ENCODE measurements at regions of chr22 and their contacts with region 1.

Region 1: DNA sequence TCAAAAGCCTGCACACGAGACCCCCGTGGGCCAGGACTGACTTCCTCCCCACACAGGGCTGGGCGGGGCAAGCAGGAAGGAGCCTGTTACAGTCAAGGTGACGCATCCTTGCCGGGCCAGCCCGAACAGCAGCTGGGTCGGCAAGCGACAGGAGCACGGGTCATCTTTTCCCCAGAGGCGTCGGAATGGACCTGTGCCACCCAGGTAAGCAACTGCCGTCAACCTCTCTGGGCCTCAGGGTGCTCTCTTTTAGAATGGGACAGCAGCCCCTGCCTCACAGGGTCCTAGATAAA is at the start of gene CYTH4:
- DNase-seq: no peak
- ATAC-seq: peak; percentile 79
- H3K4me3 ChIP-seq: peak within 1 kb of the TSS; percentile 69
- H3K27ac ChIP-seq: peak within 1 kb of the TSS; percentile 93
- H3K4me1 ChIP-seq: peaks cover 30% of the 10 kb centered on the region
- H3K27me3 ChIP-seq: no peaks in the 10 kb centered on the region
- CTCF ChIP-seq: no peak
- EP300 ChIP-seq: no peak
- POLR2A ChIP-seq: peak; percentile 80
- RAD21 ChIP-seq: no peak
- polyA plus RNA-seq, gene CYTH4: 1.5 to 1.8 TPM

Region 2: DNA sequence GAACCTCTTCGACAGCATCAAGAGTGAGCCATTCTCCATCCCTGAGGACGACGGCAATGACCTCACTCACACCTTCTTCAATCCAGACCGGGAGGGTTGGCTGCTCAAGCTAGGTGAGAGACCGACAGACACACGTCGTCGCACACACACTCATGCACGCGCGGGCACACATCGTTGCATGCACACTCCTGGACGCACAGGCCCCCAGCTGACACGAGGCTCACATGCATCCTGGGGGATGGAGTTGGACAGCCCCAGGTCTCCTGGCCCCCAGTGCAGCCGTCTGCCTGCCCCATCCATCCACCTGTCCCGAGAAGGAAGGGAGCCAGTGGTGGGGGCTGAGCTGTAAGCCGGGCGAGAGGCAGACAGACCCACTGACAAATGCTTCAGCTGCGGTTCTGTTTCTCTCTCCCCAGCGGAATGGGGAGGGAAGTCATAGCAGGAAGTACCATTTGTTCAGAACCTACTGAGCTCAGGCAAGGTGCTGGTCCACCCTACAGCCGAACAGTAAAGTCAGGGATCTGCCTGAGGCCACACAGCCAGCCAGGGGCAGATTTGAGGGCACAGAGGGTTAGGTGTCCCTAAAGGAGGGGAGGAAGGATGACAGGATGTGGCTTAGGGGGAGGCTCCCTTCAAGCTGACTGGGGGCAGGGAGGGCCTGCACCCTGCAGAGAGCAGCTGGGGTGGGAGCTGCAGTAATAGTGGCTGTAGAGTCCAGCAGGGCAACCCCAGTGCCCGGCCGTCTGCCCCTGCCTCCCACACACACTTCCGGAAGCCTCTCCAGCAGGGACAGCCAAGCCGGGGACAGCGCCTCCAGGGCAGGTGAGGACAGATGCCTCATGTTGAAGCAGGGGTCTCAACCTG is 27.1 kb after region 1 on chr22:
- CTCF ChIA-PET with region 1: interaction called, 13 read pairs
- POLR2A ChIA-PET with region 1: interaction called, 12 read pairs
- RAD21 ChIA-PET with region 1: interaction called, 13 read pairs
- SMC1A ChIA-PET with region 1: interaction called, 22 read pairs
- in situ Hi-C with region 1: no loop called
- intact Hi-C with region 1: loop called (anchors 1 kb)
- DNase-seq: peak; percentile 55
- ATAC-seq: peak; percentile 55
- H3K4me3 ChIP-seq: no peak overlapping the region; the same call in 1 of the 2 replicates
- H3K27ac ChIP-seq: peak overlapping the region; percentile 91
- H3K4me1 ChIP-seq: peaks cover 74% of the 10 kb centered on the region
- H3K27me3 ChIP-seq: no peaks in the 10 kb centered on the region
- CTCF ChIP-seq: no peak
- EP300 ChIP-seq: no peak; a peak in 1 of 4 replicates
- POLR2A ChIP-seq: peak; percentile 40; the same call in 1 of the 2 replicates
- RAD21 ChIP-seq: no peak

Region 3: GRCh38 chr22:37394341-37394740 is 112.0 kb after region 1 on chr22:
- CTCF ChIA-PET with region 1: no interaction called
- POLR2A ChIA-PET with region 1: no interaction called
- RAD21 ChIA-PET with region 1: no interaction called
- SMC1A ChIA-PET with region 1: no interaction called
- in situ Hi-C with region 1: no loop called
- intact Hi-C with region 1: no loop called
- DNase-seq: no peak
- ATAC-seq: no peak
- H3K4me3 ChIP-seq: no peak overlapping the region
- H3K27ac ChIP-seq: no peak overlapping the region
- H3K4me1 ChIP-seq: no peaks in the 10 kb centered on the region
- H3K27me3 ChIP-seq: no peaks in the 10 kb centered on the region; a peak in 2 of 4 replicates
- CTCF ChIP-seq: no peak
- EP300 ChIP-seq: no peak
- POLR2A ChIP-seq: no peak
- RAD21 ChIP-seq: no peak